Natural killer cell (primary cell): ENCODE measurements at regions of chr10 and their contacts with region 1.

Region 1: GRCh38 chr10:74176380-74177139 is 25.5 kb downstream of the ADK start:
- DNase-seq: peak; percentile 92 to 98
- ATAC-seq: peak; percentile 92 to 99 (median 95)
- H3K4me3 ChIP-seq: peak overlapping the region; percentile 80
- H3K4me3 Mint-ChIP-seq: peak overlapping the region; percentile 97
- H3K27ac ChIP-seq: peak overlapping the region; percentile 84
- H3K27ac Mint-ChIP-seq: peak overlapping the region; percentile 91 to 95
- H3K4me1 ChIP-seq: peaks cover 14% of the 10 kb centered on the region
- H3K4me1 Mint-ChIP-seq: peaks cover 15 to 32% of the 10 kb centered on the region in 2 donors
- H3K27me3 ChIP-seq: no peaks in the 10 kb centered on the region
- H3K27me3 Mint-ChIP-seq: no peaks in the 10 kb centered on the region
- CTCF ChIP-seq: no peak

Region 2: DNA sequence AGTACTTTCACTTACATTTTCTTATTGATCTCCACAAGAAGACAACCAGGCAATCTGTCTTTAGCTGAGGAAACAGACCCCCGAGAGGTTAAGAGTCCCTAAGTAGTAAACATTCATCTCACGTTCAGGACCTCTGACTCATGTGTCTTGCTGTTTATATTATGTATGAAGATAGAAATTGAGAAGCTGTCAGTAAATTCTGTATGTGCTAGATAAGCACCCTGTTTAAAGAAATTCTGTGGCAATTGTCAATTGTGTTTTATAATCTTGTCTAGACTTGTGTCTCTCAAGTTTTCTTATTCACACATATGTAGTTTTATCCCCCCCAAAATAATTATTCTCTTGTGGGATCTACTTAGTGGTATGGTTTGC is 11.0 kb before region 1 on chr10:
- intact Hi-C with region 1: no loop called
- DNase-seq: no peak
- ATAC-seq: no peak
- H3K4me3 ChIP-seq: no peak overlapping the region
- H3K4me3 Mint-ChIP-seq: no peak overlapping the region
- H3K27ac ChIP-seq: no peak overlapping the region
- H3K27ac Mint-ChIP-seq: no peak overlapping the region
- H3K4me1 ChIP-seq: peaks cover 9% of the 10 kb centered on the region
- H3K4me1 Mint-ChIP-seq: peaks cover 7 to 13% of the 10 kb centered on the region in 2 donors
- H3K27me3 ChIP-seq: no peaks in the 10 kb centered on the region
- H3K27me3 Mint-ChIP-seq: no peaks in the 10 kb centered on the region
- CTCF ChIP-seq: no peak

Region 3: GRCh38 chr10:74282151-74282850 is 105.7 kb after region 1 on chr10:
- intact Hi-C with region 1: no loop called
- DNase-seq: no peak
- ATAC-seq: no peak
- H3K4me3 ChIP-seq: no peak overlapping the region
- H3K4me3 Mint-ChIP-seq: no peak overlapping the region
- H3K27ac ChIP-seq: no peak overlapping the region
- H3K27ac Mint-ChIP-seq: no peak overlapping the region
- H3K4me1 ChIP-seq: no peaks in the 10 kb centered on the region
- H3K4me1 Mint-ChIP-seq: peaks cover 0 to 5% of the 10 kb centered on the region in 2 donors
- H3K27me3 ChIP-seq: no peaks in the 10 kb centered on the region
- H3K27me3 Mint-ChIP-seq: no peaks in the 10 kb centered on the region
- CTCF ChIP-seq: no peak

Region 4: GRCh38 chr10:75210282-75211006 is 1033.9 kb after region 1 on chr10 and contains the start of gene VDAC2:
- intact Hi-C with region 1: loop called (anchors 2 kb)
- DNase-seq: peak; percentile 98
- ATAC-seq: peak; percentile 89 to 96 (median 90)
- H3K4me3 ChIP-seq: peak within 1 kb of the TSS; percentile 97
- H3K4me3 Mint-ChIP-seq: peak within 1 kb of the TSS; percentile 100
- H3K27ac ChIP-seq: peak within 1 kb of the TSS; percentile 100
- H3K27ac Mint-ChIP-seq: peak within 1 kb of the TSS; percentile 95 to 99
- H3K4me1 ChIP-seq: peaks cover 18% of the 10 kb centered on the region
- H3K4me1 Mint-ChIP-seq: peaks cover 16 to 28% of the 10 kb centered on the region in 2 donors
- H3K27me3 ChIP-seq: no peaks in the 10 kb centered on the region
- H3K27me3 Mint-ChIP-seq: no peaks in the 10 kb centered on the region
- CTCF ChIP-seq: no peak
- total RNA-seq, gene VDAC2: 110 to 124 (median 117) TPM